Gastrocnemius medialis (tissue), 4 donors: ENCODE measurements at regions of chr14 and their contacts with region 1.

Region 1: GRCh38 chr14:52131640-52132320 is 62.9 kb upstream of the NID2 start:
- DNase-seq: peak; percentile 26 to 42
- ATAC-seq: no peak
- H3K4me3 ChIP-seq: no peak overlapping the region
- H3K27ac ChIP-seq: no peak overlapping the region
- H3K4me1 ChIP-seq: no peaks in the 10 kb centered on the region
- H3K27me3 ChIP-seq: no peaks in the 10 kb centered on the region
- CTCF ChIP-seq: peak; percentile 29 to 60 (median 52)
- POLR2A ChIP-seq: no peak

Region 2: DNA sequence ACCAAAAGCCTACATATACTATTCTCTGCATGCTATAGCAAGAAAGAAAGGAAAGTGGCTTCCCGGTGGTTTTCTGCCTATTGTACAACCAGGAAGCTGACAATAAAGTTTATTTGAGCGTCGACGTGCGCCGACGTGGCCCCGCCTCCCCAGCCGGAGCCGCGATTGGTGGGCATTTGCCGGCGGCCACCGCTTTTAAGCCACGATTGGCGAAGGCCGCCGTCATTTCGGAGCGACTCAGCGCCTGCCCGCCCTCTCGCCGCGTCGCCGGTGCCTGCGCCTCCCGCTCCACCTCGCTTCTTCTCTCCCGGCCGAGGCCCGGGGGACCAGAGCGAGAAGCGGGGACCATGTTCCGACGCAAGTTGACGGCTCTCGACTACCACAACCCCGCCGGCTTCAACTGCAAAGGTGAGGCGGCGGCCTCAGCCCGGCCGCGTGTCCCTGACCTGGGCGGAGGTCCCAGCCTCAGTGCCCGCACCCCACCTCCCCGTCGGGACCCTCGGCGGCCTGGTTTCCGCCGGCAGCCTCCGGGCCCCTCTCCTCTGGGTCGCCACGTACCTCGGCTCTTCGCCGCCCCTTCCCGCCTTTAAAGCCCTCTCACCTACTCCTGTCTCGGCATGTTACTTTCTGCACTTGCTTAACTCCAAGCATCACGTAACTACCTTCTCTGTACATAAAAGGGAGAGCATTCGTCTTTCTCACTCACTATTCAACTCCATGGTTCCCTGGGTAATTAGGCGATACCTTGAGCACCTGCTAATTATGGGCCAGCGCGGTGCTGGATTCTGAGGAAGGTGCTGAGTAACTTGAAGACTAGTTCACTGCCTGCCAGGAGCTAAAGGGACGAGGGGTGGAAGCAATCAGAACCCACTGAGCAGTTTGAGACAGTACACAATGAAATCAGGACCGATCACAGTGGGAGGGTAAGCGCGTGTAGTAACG is 142.2 kb before region 1 on chr14 and contains the start of gene RTRAF:
- in situ Hi-C with region 1: loop called in 2 of 4 experiments (anchors 10 kb)
- intact Hi-C with region 1: no loop called
- DNase-seq: peak; percentile 90 to 91
- ATAC-seq: peak; percentile 96 to 98
- H3K4me3 ChIP-seq: peak within 1 kb of the TSS; percentile 89 to 100 (median 98)
- H3K27ac ChIP-seq: peak within 1 kb of the TSS; percentile 93 to 96 (median 94)
- H3K4me1 ChIP-seq: peaks cover 26 to 27% of the 10 kb centered on the region in 2 donors
- H3K27me3 ChIP-seq: no peaks in the 10 kb centered on the region
- CTCF ChIP-seq: no peak
- POLR2A ChIP-seq: peak; percentile 83 to 89
- total RNA-seq, gene RTRAF: 68.6 to 91.2 (median 78.4) TPM

Region 3: DNA sequence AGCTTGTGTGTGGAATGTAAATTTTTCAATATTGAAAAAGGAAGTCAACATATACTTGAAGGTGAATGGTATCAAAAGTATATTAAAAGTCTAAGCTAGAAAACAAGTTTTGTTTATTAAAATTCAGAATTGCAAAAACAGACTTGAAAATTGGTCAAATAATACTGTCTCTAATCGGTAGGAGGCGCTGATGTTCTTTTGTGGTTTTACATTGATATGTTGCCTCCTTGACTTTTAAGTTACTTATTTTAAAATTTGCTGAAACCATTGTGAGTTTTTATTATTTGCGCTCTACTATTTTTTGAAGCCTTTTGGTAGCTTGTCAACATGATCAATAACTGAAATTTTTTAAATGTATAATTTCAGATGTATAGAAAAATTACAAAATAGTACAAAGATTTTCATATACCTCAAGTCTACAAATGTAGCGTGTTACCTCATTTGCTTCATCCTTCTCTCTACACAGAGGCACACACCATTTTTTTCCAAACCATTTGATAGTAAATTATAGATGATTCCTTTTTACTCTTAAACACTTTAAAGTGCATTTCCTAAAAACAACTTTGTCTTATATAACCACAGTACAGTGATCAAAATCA is 135.5 kb before region 1 on chr14:
- in situ Hi-C with region 1: loop called (anchors 5 to 10 kb)
- intact Hi-C with region 1: loop called (anchors 1 kb)
- DNase-seq: no peak
- ATAC-seq: no peak
- H3K4me3 ChIP-seq: no peak overlapping the region
- H3K27ac ChIP-seq: no peak overlapping the region
- H3K4me1 ChIP-seq: peaks cover 8 to 10% of the 10 kb centered on the region in 2 donors
- H3K27me3 ChIP-seq: no peaks in the 10 kb centered on the region
- CTCF ChIP-seq: peak in 4 of 5 experiments; percentile 49 to 68 (median 66)
- POLR2A ChIP-seq: no peak